ENCODE measurements at regions of chr7 and their contacts with region 1.

Region 1: GRCh38 chr7:138854115-138854645 is 56.2 kb upstream of the ATP6V0A4 start:
- DNase-seq: no peak
- H3K4me3 Mint-ChIP-seq: no peak overlapping the region
- H3K27ac Mint-ChIP-seq: no peak overlapping the region
- H3K4me1 Mint-ChIP-seq: peaks cover 7% of the 10 kb centered on the region
- H3K27me3 Mint-ChIP-seq: no peaks in the 10 kb centered on the region
- CTCF ChIP-seq: no peak

Region 2: GRCh38 chr7:138137423-138138171 is 716.6 kb before region 1 on chr7:
- CTCF ChIA-PET with region 1: interaction called, 13 read pairs
- intact Hi-C with region 1: no loop called
- DNase-seq: no peak
- H3K4me3 Mint-ChIP-seq: no peak overlapping the region
- H3K27ac Mint-ChIP-seq: no peak overlapping the region
- H3K4me1 Mint-ChIP-seq: no peaks in the 10 kb centered on the region
- H3K27me3 Mint-ChIP-seq: no peaks in the 10 kb centered on the region
- CTCF ChIP-seq: no peak

Region 3: GRCh38 chr7:139218173-139218572 is 364.0 kb after region 1 on chr7:
- CTCF ChIA-PET with region 1: no interaction called
- intact Hi-C with region 1: no loop called
- DNase-seq: no peak
- H3K4me3 Mint-ChIP-seq: no peak overlapping the region
- H3K27ac Mint-ChIP-seq: no peak overlapping the region
- H3K4me1 Mint-ChIP-seq: no peaks in the 10 kb centered on the region
- H3K27me3 Mint-ChIP-seq: peaks cover 19% of the 10 kb centered on the region
- CTCF ChIP-seq: no peak